Right cardiac atrium (tissue), 5 donors: ENCODE measurements at regions of chr5 and their contacts with region 1.

Region 1: DNA sequence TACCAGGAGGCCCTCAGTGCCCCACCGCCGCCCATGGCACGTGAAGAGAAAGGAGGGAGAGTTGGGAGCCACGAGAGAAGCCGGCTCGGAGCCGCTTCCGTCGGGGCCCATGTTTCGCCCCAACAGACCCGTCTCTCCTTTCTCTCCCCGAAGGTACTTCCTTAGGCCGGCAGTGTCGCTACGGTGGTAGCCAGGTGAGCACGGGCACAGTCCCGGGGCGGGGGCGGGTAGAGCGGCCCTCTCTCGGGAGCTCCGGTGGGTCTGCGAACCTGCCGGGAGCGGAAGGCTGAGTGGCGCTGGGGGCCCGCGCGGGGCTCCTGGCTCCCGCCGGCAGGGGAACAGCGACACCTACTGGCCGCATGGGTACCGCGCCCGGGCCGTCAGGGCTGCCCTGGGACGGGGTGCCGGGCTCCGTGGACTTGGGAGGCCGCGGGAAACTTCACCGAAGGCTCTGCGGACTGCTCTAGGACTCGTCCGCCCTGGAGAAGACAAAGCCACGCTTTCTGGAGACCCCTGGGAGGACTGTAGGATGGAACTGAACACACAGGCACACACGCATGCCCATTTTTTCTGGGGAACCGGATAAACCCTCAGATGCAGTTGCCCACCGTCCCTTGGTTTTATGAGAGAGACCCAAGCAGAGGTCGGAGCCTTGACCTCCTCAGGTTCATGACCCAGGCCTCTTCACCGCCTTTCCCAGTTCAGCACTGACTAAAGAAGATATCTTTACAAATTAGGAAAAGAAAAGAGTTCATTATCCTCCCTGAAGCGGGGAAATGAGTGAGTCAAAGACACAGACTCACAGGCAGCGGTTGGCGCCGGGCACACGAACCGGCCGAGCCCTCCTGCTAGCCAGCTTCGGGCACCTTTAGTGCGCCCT is 202.5 kb downstream of the MEF2C start:
- DNase-seq: peak; percentile 63 to 86 (median 86)
- ATAC-seq: peak; percentile 92 to 94
- H3K4me3 ChIP-seq: peak overlapping the region; percentile 67
- H3K27ac ChIP-seq: no peak overlapping the region
- H3K4me1 ChIP-seq: peaks cover 4% of the 10 kb centered on the region
- H3K27me3 ChIP-seq: peaks cover 4% of the 10 kb centered on the region

Region 2: GRCh38 chr5:87780831-87781760 is 899.4 kb before region 1 on chr5:
- intact Hi-C with region 1: loop called in 3 of 4 experiments (anchors 2 to 5 kb)
- DNase-seq: peak; percentile 75 to 79 (median 78)
- ATAC-seq: peak; percentile 92 to 94
- H3K4me3 ChIP-seq: no peak overlapping the region
- H3K27ac ChIP-seq: no peak overlapping the region
- H3K4me1 ChIP-seq: no peaks in the 10 kb centered on the region
- H3K27me3 ChIP-seq: no peaks in the 10 kb centered on the region

Region 3: DNA sequence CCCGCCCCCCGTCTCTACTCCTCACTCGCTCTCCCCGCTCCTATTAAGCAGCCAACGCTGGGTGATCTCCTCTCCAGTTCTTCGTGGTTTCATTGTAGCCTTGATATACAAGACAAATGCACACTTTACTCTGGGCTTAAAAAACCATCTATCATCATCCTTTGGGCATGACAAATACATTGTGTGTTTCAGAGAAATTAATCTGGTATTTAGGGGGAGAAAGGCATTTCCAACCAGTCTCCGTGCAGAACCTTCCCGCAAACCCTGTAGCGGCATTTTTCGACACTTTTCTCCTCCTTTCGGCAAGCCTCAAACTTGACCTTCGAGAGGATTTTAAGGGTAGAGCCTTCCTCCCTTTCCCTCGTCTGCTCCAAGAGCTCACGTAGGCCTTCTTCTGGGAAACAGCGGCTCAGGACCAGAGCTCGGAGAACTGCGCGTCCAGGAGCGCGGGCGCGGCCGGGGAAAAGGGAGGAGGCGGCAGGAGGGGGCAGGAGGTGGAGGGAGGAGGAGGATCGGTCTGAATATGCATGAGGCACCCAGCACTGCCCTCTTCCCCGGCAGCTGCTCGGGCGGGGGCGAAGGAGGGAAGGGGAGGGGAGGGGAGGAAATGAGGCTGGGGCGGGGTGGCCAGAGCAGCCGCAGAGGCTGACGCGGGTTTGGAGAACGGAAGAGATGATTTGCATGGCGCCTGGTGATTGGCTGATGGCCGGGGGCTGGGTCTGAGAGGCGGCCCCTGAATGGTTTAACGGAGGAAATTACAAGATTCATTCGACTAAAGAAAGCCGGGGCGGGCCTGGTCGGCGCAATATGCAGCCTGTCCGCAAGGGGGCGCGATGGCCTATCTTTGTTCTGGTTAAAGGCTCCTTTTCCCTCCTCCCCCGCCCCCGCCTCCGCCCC is 539.4 kb before region 1 on chr5:
- intact Hi-C with region 1: loop called in 3 of 4 experiments (anchors 5 kb)
- DNase-seq: peak; percentile 97 to 98 (median 98)
- ATAC-seq: peak; percentile 99
- H3K4me3 ChIP-seq: peak overlapping the region; percentile 58
- H3K27ac ChIP-seq: no peak overlapping the region
- H3K4me1 ChIP-seq: peaks cover 2% of the 10 kb centered on the region
- H3K27me3 ChIP-seq: peaks cover 2% of the 10 kb centered on the region

Region 4: DNA sequence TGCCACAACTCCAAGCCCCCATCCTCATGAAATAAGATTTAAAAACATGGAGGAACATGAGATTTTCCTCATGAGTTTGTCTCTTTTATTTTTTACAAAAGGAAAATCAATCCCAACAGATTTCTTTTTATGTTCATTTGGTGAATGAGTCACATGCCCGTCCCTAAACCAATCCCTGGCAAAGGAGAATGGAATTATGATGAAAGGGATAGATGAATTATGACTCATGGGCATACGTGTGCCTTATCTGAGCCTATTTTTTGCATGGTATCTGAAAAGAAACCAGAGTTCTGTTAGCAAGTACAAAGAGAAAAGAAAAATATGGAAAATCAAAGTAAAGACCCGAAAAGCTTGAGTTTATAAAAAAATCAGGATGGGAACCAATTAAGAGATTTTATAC is 144.3 kb before region 1 on chr5:
- intact Hi-C with region 1: no loop called
- DNase-seq: no peak
- ATAC-seq: no peak
- H3K4me3 ChIP-seq: no peak overlapping the region
- H3K27ac ChIP-seq: no peak overlapping the region
- H3K4me1 ChIP-seq: no peaks in the 10 kb centered on the region
- H3K27me3 ChIP-seq: no peaks in the 10 kb centered on the region